ENCODE measurements at regions of chr20 and their contacts with region 1.

Region 1: DNA sequence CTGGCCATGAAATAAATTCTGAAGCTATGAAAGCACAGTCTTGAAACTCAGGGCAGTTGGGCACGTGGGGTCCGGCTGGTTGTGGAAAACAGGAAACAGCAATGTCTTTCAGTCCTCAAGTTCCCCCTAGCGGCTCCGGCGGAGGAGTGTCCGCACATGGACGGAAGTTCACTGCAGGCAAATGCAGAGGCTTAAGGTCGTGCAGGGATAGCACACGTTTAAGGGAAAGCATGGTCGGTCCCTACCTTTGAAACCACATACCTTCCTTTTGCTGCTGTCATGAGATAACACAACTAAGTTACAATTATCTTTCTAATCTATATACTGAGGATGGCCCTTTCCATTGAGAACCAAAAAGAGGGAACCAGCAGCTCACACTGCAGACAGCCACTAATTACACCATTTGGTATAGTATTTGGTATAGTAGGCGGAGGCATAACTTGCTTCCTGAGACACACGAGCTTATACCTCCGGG is 52.6 kb upstream of the NFATC2 start:
- DNase-seq: peak; percentile 50 to 89 (median 75)
- ATAC-seq: peak; percentile 90
- H3K4me3 ChIP-seq: no peak overlapping the region
- H3K4me3 Mint-ChIP-seq: peak overlapping the region; percentile 38
- H3K27ac ChIP-seq: no peak overlapping the region
- H3K27ac Mint-ChIP-seq: peak overlapping the region; percentile 11
- H3K4me1 ChIP-seq: peaks cover 5% of the 10 kb centered on the region
- H3K4me1 Mint-ChIP-seq: peaks cover 12% of the 10 kb centered on the region
- H3K27me3 ChIP-seq: no peaks in the 10 kb centered on the region
- H3K27me3 Mint-ChIP-seq: no peaks in the 10 kb centered on the region
- CTCF ChIP-seq: peak; percentile 84

Region 2: DNA sequence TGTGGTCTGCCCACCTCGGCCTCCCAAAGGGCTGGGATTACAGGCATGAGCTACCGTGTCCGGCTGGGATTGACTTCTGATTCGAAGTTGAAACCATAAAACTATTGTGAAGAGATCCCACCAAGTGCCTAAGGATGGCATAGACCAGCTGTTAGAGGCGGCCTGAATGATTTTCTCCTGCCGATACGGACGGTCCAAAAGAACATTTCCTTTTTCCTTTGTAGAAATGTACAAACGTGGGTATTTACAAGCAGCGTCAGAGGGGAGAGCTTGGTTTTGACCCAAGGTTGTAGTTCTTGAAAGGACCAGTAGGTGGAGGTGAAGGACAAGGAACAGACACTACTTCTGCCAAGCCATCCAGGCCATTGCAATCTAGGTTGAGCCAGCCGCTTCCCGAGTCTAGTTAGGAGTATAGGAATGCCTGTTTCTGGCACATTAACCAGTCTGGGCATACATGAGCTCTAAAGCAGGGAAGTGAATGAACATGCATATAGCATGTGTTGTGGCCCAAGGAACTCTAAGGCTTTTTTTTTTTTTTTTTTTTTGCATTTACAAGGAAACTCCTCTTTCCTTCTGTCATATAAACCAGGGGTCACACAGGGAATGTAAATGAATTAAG is 607.4 kb before region 1 on chr20:
- CTCF ChIA-PET with region 1: interaction called, 16 read pairs
- POLR2A ChIA-PET with region 1: no interaction called
- intact Hi-C with region 1: loop called (anchors 2 to 10 kb)
- DNase-seq: peak; percentile 26 to 84 (median 51)
- ATAC-seq: peak; percentile 94
- H3K4me3 ChIP-seq: no peak overlapping the region
- H3K4me3 Mint-ChIP-seq: no peak overlapping the region
- H3K27ac ChIP-seq: no peak overlapping the region
- H3K27ac Mint-ChIP-seq: no peak overlapping the region
- H3K4me1 ChIP-seq: no peaks in the 10 kb centered on the region
- H3K4me1 Mint-ChIP-seq: peaks cover 2% of the 10 kb centered on the region
- H3K27me3 ChIP-seq: peaks cover 3 to 7% of the 10 kb centered on the region in 2 experiments
- H3K27me3 Mint-ChIP-seq: peaks cover 26% of the 10 kb centered on the region
- CTCF ChIP-seq: peak; percentile 94

Region 3: DNA sequence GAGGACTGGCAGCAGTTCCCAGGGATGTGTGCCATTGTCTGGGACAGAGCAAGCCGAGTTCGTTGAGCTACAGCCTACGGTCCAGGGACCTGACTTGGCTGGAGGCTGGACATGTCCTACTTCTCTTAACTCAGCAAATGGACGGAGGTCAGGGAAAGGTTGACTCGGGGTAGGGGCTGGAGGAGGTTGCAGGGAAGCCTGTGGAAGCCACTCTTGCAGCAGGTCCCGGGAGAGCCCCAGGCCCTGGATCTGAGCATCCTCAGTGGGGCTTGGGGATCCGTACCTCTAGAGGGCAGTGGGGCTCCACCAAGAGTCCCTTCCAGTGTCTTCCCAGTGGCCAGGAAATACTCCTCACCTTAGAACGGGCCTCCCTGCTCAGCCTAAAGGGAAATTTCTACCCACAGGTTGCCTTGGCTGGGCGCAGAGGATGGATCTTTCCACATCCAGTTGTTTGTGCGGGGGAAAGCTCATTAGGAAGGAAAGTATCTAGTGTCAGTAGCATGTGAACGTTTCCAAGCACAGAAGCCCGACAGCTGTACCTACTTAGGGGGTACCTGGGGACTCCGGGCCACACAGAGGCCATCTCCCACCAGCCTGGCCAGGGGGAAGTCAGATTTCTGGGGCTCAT is 222.8 kb before region 1 on chr20:
- CTCF ChIA-PET with region 1: interaction called, 103 read pairs
- POLR2A ChIA-PET with region 1: interaction called, 4 read pairs
- intact Hi-C with region 1: loop called (anchors 1 kb)
- DNase-seq: peak; percentile 22 to 77 (median 58)
- ATAC-seq: peak; percentile 62
- H3K4me3 ChIP-seq: no peak overlapping the region
- H3K4me3 Mint-ChIP-seq: no peak overlapping the region
- H3K27ac ChIP-seq: no peak overlapping the region
- H3K27ac Mint-ChIP-seq: no peak overlapping the region
- H3K4me1 ChIP-seq: no peaks in the 10 kb centered on the region
- H3K4me1 Mint-ChIP-seq: peaks cover 5% of the 10 kb centered on the region
- H3K27me3 ChIP-seq: no peaks in the 10 kb centered on the region
- H3K27me3 Mint-ChIP-seq: no peaks in the 10 kb centered on the region
- CTCF ChIP-seq: peak; percentile 60

Region 4: DNA sequence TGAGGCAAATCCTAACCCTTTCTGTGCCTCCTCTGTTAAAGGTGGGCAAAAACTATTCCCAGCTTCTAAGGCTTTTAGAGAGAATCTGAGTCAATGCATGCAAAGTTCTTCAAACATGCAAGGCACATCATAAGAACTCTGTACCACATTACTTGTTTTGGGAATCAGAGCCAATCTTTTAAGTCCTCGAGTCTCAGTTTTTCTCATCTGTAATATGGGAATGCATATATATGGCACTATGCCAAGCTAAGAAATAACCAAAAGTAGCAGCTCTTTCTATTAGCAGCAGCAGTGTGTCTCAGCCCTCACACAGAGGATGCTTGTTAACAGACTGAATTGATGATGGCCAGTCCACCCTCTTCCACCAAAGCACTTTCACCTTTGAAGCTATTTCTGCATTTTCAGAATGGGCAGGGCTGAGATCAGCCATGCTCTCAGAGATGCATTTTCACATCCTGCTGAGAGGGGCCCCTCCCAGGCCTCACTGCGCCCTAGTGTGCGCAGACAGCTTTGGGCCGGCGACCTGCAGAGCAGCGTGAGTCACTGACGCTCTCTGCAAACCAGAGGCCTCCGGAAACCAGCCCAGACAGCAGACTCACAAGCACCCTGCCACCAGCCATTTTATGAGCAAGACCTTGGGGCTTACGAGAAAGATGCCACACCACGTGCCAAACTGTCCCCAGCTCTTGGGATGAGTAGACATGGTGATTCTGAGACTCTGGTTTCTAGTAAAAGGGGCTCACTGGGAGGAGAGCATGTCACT is 190.6 kb before region 1 on chr20:
- CTCF ChIA-PET with region 1: interaction called, 18 read pairs
- POLR2A ChIA-PET with region 1: interaction called, 4 read pairs
- intact Hi-C with region 1: no loop called
- DNase-seq: peak; percentile 71 to 96 (median 84)
- ATAC-seq: peak; percentile 73
- H3K4me3 ChIP-seq: no peak overlapping the region
- H3K4me3 Mint-ChIP-seq: no peak overlapping the region
- H3K27ac ChIP-seq: peak overlapping the region; percentile 62 to 99
- H3K27ac Mint-ChIP-seq: peak overlapping the region; percentile 99
- H3K4me1 ChIP-seq: peaks cover 61% of the 10 kb centered on the region
- H3K4me1 Mint-ChIP-seq: peaks cover 76% of the 10 kb centered on the region
- H3K27me3 ChIP-seq: no peaks in the 10 kb centered on the region
- H3K27me3 Mint-ChIP-seq: no peaks in the 10 kb centered on the region
- CTCF ChIP-seq: no peak

Region 5: GRCh38 chr20:51541189-51542032 is 53.7 kb before region 1 on chr20:
- CTCF ChIA-PET with region 1: interaction called, 14 read pairs
- POLR2A ChIA-PET with region 1: interaction called, 3 read pairs
- intact Hi-C with region 1: loop called in 1 of 2 experiments (anchors 2 kb)
- DNase-seq: peak; percentile 63 to 96 (median 81)
- ATAC-seq: peak; percentile 76
- H3K4me3 ChIP-seq: peak overlapping the region; percentile 57 to 82
- H3K4me3 Mint-ChIP-seq: peak overlapping the region; percentile 97
- H3K27ac ChIP-seq: peak overlapping the region; percentile 76 to 92
- H3K27ac Mint-ChIP-seq: peak overlapping the region; percentile 99
- H3K4me1 ChIP-seq: peaks cover 52% of the 10 kb centered on the region
- H3K4me1 Mint-ChIP-seq: peaks cover 57% of the 10 kb centered on the region
- H3K27me3 ChIP-seq: no peaks in the 10 kb centered on the region
- H3K27me3 Mint-ChIP-seq: no peaks in the 10 kb centered on the region
- CTCF ChIP-seq: no peak

Region 6: GRCh38 chr20:51608061-51608460 is 13.0 kb after region 1 on chr20:
- CTCF ChIA-PET with region 1: interaction called, 10 read pairs
- POLR2A ChIA-PET with region 1: no interaction called
- intact Hi-C with region 1: no loop called
- DNase-seq: peak in 1 of 9 experiments; percentile 24
- ATAC-seq: no peak
- H3K4me3 ChIP-seq: no peak overlapping the region
- H3K4me3 Mint-ChIP-seq: peak overlapping the region; percentile 23
- H3K27ac ChIP-seq: no peak overlapping the region
- H3K27ac Mint-ChIP-seq: no peak overlapping the region
- H3K4me1 ChIP-seq: no peaks in the 10 kb centered on the region
- H3K4me1 Mint-ChIP-seq: peaks cover 7% of the 10 kb centered on the region
- H3K27me3 ChIP-seq: no peaks in the 10 kb centered on the region
- H3K27me3 Mint-ChIP-seq: peaks cover 2% of the 10 kb centered on the region
- CTCF ChIP-seq: no peak